ENCODE measurements at regions of chr7 and their contacts with region 1.

Region 1: GRCh38 chr7:134327896-134328295 is 11.2 kb upstream of the SLC35B4 start:
- DNase-seq: peak; percentile 42
- ATAC-seq: peak; percentile 99
- H3K4me3 ChIP-seq: no peak overlapping the region
- H3K27ac ChIP-seq: no peak overlapping the region
- H3K4me1 ChIP-seq: no peaks in the 10 kb centered on the region; the same call in 1 of the 2 replicates
- H3K27me3 ChIP-seq: no peaks in the 10 kb centered on the region; a peak in 1 of 4 replicates
- CTCF ChIP-seq: peak; percentile 70 to 74 (median 74)
- EP300 ChIP-seq: no peak
- POLR2A ChIP-seq: no peak
- RAD21 ChIP-seq: peak; percentile 83

Region 2: GRCh38 chr7:133230591-133231194 is 1097.2 kb before region 1 on chr7:
- CTCF ChIA-PET with region 1: no interaction called
- POLR2A ChIA-PET with region 1: no interaction called
- RAD21 ChIA-PET with region 1: no interaction called
- SMC1A ChIA-PET with region 1: no interaction called
- in situ Hi-C with region 1: no loop called
- intact Hi-C with region 1: loop called (anchors 5 kb)
- DNase-seq: no peak
- ATAC-seq: peak; percentile 71
- H3K4me3 ChIP-seq: no peak overlapping the region
- H3K27ac ChIP-seq: no peak overlapping the region
- H3K4me1 ChIP-seq: no peaks in the 10 kb centered on the region
- H3K27me3 ChIP-seq: peaks cover 0 to 4% of the 10 kb centered on the region in 2 experiments; a peak in 2 of 4 replicates
- CTCF ChIP-seq: peak; percentile 56 to 72 (median 61); a peak in 5 of 6 replicates
- EP300 ChIP-seq: no peak
- POLR2A ChIP-seq: no peak
- RAD21 ChIP-seq: peak; percentile 79

Region 3: DNA sequence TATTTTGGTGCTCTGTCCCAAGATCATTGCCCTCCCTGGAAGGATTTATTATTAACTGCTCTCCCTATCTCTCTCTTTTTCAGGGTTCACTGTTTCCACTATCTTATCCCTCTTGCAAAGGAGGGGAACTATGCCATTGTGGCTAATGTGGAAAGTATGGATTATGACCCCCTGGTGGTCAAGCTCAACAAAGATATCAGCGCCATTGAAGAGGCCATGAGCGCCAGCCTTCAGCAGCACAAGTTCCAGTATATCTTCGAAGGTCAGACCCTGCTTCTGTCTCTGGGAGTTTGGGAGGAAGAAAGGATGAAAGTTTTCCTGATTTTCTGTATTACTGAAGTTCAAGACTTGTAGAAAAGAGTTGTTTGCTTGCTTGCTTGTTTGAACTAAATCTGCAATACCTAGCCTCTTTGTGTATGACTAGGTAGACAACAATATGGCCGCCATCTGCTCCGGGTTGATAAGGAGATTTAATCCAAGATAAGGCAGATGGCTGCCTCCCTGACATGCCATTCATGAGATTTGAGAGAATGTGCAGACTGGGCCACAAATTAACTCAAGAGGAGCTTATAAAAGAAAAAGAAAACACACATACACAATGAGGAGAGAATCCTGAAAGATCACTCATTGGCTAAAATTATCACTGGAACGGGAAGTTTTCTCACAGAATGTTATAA is 322.9 kb before region 1 on chr7:
- CTCF ChIA-PET with region 1: no interaction called
- POLR2A ChIA-PET with region 1: no interaction called
- RAD21 ChIA-PET with region 1: no interaction called
- SMC1A ChIA-PET with region 1: no interaction called
- in situ Hi-C with region 1: no loop called
- intact Hi-C with region 1: loop called (anchors 10 kb)
- DNase-seq: no peak
- ATAC-seq: no peak
- H3K4me3 ChIP-seq: no peak overlapping the region
- H3K27ac ChIP-seq: no peak overlapping the region
- H3K4me1 ChIP-seq: no peaks in the 10 kb centered on the region
- H3K27me3 ChIP-seq: no peaks in the 10 kb centered on the region
- CTCF ChIP-seq: no peak
- EP300 ChIP-seq: no peak
- POLR2A ChIP-seq: no peak
- RAD21 ChIP-seq: no peak

Region 4: DNA sequence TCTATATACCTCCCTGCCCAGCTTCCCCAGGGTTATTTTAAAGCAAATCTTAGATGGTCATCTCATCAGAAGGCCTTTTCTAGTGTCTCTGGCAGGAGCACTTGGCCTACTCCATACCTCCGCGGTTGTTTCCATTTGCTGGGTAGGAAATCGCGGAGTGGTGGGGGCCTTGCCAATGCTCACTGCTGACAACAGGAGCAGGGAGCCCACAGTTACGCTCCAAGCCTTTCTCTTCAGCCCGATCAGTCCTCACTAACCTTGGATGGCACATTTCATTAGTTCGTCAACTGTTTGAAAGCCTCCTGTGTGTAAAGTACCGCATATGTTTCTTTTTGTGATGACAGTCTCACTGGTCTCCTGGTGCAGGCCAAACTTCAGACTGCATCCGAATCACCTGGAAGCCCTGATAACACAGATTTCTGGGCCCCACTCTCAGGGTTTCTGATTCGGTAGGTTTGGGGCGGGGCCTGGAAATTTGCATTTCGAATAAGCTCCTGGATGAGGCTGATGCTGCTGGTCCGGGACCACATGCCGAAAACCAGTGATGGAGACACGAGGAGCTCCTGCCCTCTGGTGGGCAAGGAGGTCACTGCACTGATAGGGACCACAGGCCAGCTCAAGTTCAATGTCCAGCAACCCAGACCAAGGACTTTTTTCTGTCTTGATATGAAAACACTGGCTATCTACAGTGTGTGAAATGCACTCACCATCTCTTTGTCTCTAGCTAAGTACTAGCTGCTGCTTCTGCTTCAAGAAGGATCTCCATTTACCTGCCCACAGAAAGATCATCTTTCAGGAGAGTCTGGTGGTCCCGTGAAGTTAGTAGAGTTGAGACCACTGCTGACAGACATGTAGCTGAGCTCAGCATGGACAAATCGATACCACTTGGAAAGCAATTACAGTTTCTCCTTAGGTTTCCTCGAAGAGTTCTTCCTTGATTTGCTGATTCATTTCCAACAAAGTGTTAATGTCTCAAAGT is 186.7 kb before region 1 on chr7:
- CTCF ChIA-PET with region 1: interaction called, 6 read pairs
- POLR2A ChIA-PET with region 1: no interaction called
- RAD21 ChIA-PET with region 1: no interaction called
- SMC1A ChIA-PET with region 1: no interaction called
- in situ Hi-C with region 1: no loop called
- intact Hi-C with region 1: loop called (anchors 5 kb)
- DNase-seq: no peak
- ATAC-seq: peak; percentile 96
- H3K4me3 ChIP-seq: no peak overlapping the region
- H3K27ac ChIP-seq: no peak overlapping the region
- H3K4me1 ChIP-seq: no peaks in the 10 kb centered on the region
- H3K27me3 ChIP-seq: no peaks in the 10 kb centered on the region; a peak in 1 of 4 replicates
- CTCF ChIP-seq: peak; percentile 83 to 91 (median 88)
- EP300 ChIP-seq: no peak
- POLR2A ChIP-seq: no peak
- RAD21 ChIP-seq: peak; percentile 81

Region 5: GRCh38 chr7:134316539-134317344 is 11.2 kb before region 1 on chr7 and contains the start of gene SLC35B4:
- CTCF ChIA-PET with region 1: interaction called, 12 read pairs
- POLR2A ChIA-PET with region 1: interaction called, 3 read pairs
- RAD21 ChIA-PET with region 1: interaction called, 3 read pairs
- SMC1A ChIA-PET with region 1: interaction called, 3 read pairs
- in situ Hi-C with region 1: no loop called
- intact Hi-C with region 1: no loop called
- DNase-seq: peak; percentile 86
- ATAC-seq: peak; percentile 99
- H3K4me3 ChIP-seq: peak within 1 kb of the TSS; percentile 76
- H3K27ac ChIP-seq: peak within 1 kb of the TSS; percentile 62
- H3K4me1 ChIP-seq: no peaks in the 10 kb centered on the region
- H3K27me3 ChIP-seq: no peaks in the 10 kb centered on the region
- CTCF ChIP-seq: peak in 2 of 3 experiments; percentile 18 to 25; a peak in 1 of 6 replicates
- EP300 ChIP-seq: no peak
- POLR2A ChIP-seq: peak; percentile 80
- RAD21 ChIP-seq: no peak
- polyA plus RNA-seq, gene SLC35B4: 3.6 to 6.0 TPM

Region 6: DNA sequence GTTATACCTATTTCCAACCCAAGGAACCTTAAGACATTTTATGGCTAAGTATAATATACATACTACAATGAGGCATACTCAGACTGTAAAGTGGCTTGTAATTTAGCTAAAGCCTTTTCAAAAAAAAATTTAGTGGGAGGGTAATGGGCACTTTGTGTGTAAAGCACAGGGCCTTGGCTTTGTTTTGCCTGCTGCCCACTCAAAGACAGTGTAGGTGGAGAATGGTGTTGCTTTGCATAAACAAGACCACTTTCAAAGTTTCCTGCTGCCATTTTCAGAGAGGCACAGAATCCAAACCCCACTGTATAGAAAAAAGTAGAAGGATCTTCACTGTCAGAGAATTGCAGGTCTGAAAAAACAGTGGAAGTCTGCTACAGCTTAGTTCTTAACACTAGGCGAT is 10.1 kb after region 1 on chr7:
- CTCF ChIA-PET with region 1: interaction called, 11 read pairs
- POLR2A ChIA-PET with region 1: no interaction called
- RAD21 ChIA-PET with region 1: no interaction called
- SMC1A ChIA-PET with region 1: interaction called, 3 read pairs
- in situ Hi-C with region 1: no loop called
- intact Hi-C with region 1: no loop called
- DNase-seq: no peak
- ATAC-seq: no peak
- H3K4me3 ChIP-seq: no peak overlapping the region
- H3K27ac ChIP-seq: no peak overlapping the region
- H3K4me1 ChIP-seq: no peaks in the 10 kb centered on the region
- H3K27me3 ChIP-seq: no peaks in the 10 kb centered on the region; a peak in 1 of 4 replicates
- CTCF ChIP-seq: no peak
- EP300 ChIP-seq: no peak
- POLR2A ChIP-seq: no peak
- RAD21 ChIP-seq: no peak